Activated CD4-positive, alpha-beta memory T cell treated with anti-CD3 and anti-CD28 coated beads for 36 hours (primary cell): ENCODE measurements at regions of chr20 and their contacts with region 1.

Region 1: GRCh38 chr20:59074445-59074844 is 31.9 kb upstream of the PRELID3B start:
- DNase-seq: no peak
- H3K4me3 Mint-ChIP-seq: peak overlapping the region; percentile 18
- H3K27ac Mint-ChIP-seq: no peak overlapping the region
- H3K4me1 Mint-ChIP-seq: peaks cover 47% of the 10 kb centered on the region
- H3K27me3 Mint-ChIP-seq: peaks cover 31% of the 10 kb centered on the region

Region 2: GRCh38 chr20:58810116-58810878 is 264.1 kb before region 1 on chr20:
- CTCF ChIA-PET with region 1: no interaction called
- POLR2A ChIA-PET with region 1: no interaction called
- intact Hi-C with region 1: no loop called
- DNase-seq: peak; percentile 48
- H3K4me3 Mint-ChIP-seq: no peak overlapping the region
- H3K27ac Mint-ChIP-seq: no peak overlapping the region
- H3K4me1 Mint-ChIP-seq: peaks cover 8% of the 10 kb centered on the region
- H3K27me3 Mint-ChIP-seq: peaks cover 66% of the 10 kb centered on the region

Region 3: DNA sequence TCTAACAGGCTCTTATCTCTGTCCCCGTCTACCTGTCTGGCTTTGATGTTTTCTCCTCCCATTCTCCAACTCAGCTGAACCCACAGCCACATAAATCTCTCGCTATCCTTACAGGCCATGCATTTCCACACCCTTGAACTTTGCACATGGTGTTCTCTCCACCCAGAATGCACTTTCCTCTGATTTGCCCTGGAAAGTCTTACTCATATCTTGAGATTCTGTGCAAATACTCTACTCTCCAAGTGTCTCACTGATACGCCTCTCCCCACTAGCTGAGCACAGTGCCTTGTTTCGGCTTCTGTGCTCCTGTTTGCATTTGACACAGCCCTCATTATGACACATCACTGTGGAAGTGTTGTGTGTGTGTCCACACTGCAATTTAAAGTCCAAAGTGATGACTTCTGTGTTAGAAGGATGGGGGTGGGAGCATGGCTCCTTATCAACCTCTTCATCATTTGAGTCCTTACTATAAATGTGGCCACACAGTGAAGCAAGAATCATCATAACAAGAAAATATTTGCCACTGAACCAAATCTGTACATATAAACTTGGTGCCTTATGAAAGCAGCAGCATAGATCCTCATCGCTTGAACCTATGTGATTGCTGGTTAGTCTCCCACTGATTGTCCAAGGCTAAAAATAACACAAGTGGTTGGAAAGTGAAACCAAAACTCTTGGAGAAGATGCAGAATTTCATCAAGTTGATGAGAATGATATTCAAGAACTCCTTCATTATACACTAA is 26.3 kb before region 1 on chr20:
- CTCF ChIA-PET with region 1: no interaction called
- POLR2A ChIA-PET with region 1: no interaction called
- intact Hi-C with region 1: loop called (anchors 1 kb)
- DNase-seq: peak; percentile 68
- H3K4me3 Mint-ChIP-seq: no peak overlapping the region
- H3K27ac Mint-ChIP-seq: peak overlapping the region; percentile 47
- H3K4me1 Mint-ChIP-seq: peaks cover 31% of the 10 kb centered on the region
- H3K27me3 Mint-ChIP-seq: no peaks in the 10 kb centered on the region

Region 4: DNA sequence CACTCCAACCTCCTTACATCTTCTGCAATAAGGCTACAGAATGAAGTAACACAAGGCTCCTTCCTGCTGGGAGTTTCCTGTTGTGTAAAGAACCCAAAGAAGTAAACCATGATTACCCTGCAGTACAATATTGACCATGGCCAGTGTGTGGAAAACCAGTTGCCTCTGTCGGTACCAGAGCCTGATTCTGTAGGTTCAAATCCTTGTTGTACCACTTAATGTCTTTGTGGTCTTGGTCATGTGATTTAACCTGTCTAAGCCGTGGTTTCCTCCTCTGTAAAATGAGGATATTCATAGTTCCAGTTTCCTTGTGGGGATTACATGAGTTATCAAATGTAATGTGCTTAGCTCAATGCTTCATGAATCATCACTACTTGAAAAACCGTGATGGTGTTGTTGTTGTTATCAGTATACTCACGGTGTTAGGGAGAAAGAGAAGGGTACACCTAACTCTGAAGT is 28.4 kb after region 1 on chr20:
- CTCF ChIA-PET with region 1: no interaction called
- POLR2A ChIA-PET with region 1: no interaction called
- intact Hi-C with region 1: no loop called
- DNase-seq: no peak
- H3K4me3 Mint-ChIP-seq: no peak overlapping the region
- H3K27ac Mint-ChIP-seq: peak overlapping the region; percentile 18
- H3K4me1 Mint-ChIP-seq: peaks cover 13% of the 10 kb centered on the region
- H3K27me3 Mint-ChIP-seq: no peaks in the 10 kb centered on the region

Region 5: GRCh38 chr20:59184880-59185447 is 110.5 kb after region 1 on chr20:
- CTCF ChIA-PET with region 1: no interaction called
- POLR2A ChIA-PET with region 1: no interaction called
- intact Hi-C with region 1: no loop called
- DNase-seq: peak; percentile 56
- H3K4me3 Mint-ChIP-seq: no peak overlapping the region
- H3K27ac Mint-ChIP-seq: no peak overlapping the region
- H3K4me1 Mint-ChIP-seq: peaks cover 44% of the 10 kb centered on the region
- H3K27me3 Mint-ChIP-seq: no peaks in the 10 kb centered on the region

Region 6: GRCh38 chr20:59334651-59335300 is 260.3 kb after region 1 on chr20:
- CTCF ChIA-PET with region 1: no interaction called
- POLR2A ChIA-PET with region 1: no interaction called
- intact Hi-C with region 1: no loop called
- DNase-seq: no peak
- H3K4me3 Mint-ChIP-seq: no peak overlapping the region
- H3K27ac Mint-ChIP-seq: no peak overlapping the region
- H3K4me1 Mint-ChIP-seq: no peaks in the 10 kb centered on the region
- H3K27me3 Mint-ChIP-seq: peaks cover 2% of the 10 kb centered on the region